ENCODE measurements at regions of chr9 and their contacts with region 1.

Region 1: DNA sequence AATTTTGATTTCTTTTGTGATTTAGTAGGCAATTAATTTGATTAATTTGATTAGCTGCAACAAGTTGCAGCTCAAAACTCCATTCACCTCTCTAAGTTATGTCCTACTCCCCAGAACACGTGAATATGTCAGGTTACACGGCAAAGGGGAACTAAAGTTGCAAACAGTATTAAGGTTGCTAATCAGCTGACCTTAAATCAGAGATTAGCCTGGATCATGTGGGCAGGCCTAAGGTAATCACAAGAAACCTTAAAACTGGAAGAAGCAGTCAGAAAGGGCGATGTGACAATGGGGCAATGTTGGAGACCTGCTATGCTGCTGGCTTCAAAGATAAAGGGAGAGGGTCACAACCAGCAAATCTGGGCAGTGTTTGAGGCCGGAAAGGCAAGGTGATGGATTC is 47.3 kb upstream of the ANXA1 start:
- H3K4me3 ChIP-seq: no peak overlapping the region
- H3K27ac ChIP-seq: no peak overlapping the region
- H3K4me1 ChIP-seq: no peaks in the 10 kb centered on the region
- CTCF ChIP-seq: no peak

Region 2: DNA sequence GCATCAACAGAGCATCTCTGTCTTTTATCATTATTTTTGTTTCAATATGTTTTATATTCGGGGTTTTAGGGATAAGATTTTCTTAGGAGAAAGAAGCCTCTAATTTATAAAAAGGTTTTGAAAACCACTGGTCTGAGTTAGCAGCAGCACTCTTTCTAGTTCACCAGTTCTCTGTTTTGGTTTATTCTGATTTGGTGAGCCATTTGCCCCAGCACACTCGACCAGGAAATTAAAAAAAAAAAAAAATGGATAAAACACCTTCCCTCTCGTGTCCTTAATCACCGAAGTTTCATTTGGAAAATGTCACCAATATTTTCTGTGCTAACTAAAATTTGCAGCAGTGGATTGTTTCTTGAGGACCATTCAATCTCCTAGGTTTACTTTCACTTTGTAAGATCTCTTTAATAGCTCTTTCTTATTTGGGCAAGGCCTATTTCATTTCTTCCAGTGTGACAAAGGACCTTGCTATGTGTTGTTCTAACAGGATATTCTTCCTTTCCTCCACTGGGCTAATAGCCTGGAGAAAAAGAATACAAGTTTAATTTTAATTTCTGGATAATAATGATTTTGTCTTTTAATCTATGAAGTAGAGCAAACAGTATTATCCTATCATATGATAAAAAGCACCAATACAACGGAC is 10.5 kb before region 1 on chr9:
- CTCF ChIA-PET with region 1: interaction called, 20 read pairs
- POLR2A ChIA-PET with region 1: no interaction called
- H3K4me3 ChIP-seq: no peak overlapping the region
- H3K27ac ChIP-seq: no peak overlapping the region
- H3K4me1 ChIP-seq: no peaks in the 10 kb centered on the region
- CTCF ChIP-seq: no peak

Region 3: GRCh38 chr9:73118898-73119554 is 14.7 kb after region 1 on chr9:
- CTCF ChIA-PET with region 1: interaction called, 20 read pairs
- POLR2A ChIA-PET with region 1: no interaction called
- H3K4me3 ChIP-seq: no peak overlapping the region
- H3K27ac ChIP-seq: no peak overlapping the region
- H3K4me1 ChIP-seq: no peaks in the 10 kb centered on the region
- CTCF ChIP-seq: no peak

Region 4: GRCh38 chr9:73151653-73152542 is 47.6 kb after region 1 on chr9 and contains the start of gene ANXA1:
- CTCF ChIA-PET with region 1: interaction called, 15 read pairs
- POLR2A ChIA-PET with region 1: interaction called, 4 read pairs
- H3K4me3 ChIP-seq: peak within 1 kb of the TSS; percentile 50
- H3K27ac ChIP-seq: no peak within 1 kb of the TSS
- H3K4me1 ChIP-seq: peaks cover 1% of the 10 kb centered on the region
- CTCF ChIP-seq: no peak

Region 5: DNA sequence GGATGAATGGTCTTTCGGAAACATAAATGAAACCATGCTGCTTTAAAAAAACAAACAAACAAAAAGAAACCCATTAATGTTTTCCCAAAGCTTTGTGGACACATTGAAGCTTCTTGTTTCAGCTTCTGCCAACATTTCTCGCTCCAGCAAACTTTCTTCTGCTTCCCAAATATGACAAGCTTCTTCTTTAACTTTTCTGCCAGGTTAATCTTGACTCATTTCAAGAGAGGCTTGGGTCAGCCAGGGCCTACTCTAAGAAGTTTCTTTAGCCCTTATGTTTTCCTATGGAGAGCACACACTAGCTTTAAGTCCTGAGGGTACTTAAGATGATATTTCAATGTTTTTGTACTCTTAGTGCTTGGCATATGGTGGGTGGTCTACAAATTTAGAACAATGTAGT is 53.5 kb after region 1 on chr9:
- CTCF ChIA-PET with region 1: interaction called, 15 read pairs
- POLR2A ChIA-PET with region 1: interaction called, 4 read pairs
- H3K4me3 ChIP-seq: no peak overlapping the region
- H3K27ac ChIP-seq: no peak overlapping the region
- H3K4me1 ChIP-seq: no peaks in the 10 kb centered on the region
- CTCF ChIP-seq: no peak

Region 6: GRCh38 chr9:73173557-73174329 is 69.4 kb after region 1 on chr9:
- CTCF ChIA-PET with region 1: interaction called, 171 read pairs
- POLR2A ChIA-PET with region 1: no interaction called
- H3K4me3 ChIP-seq: no peak overlapping the region
- H3K27ac ChIP-seq: no peak overlapping the region
- H3K4me1 ChIP-seq: no peaks in the 10 kb centered on the region
- CTCF ChIP-seq: no peak

Measured in HEK293 (cell line).